PC-3 (cell line): ENCODE measurements at regions of chr7 and their contacts with region 1.

Region 1: DNA sequence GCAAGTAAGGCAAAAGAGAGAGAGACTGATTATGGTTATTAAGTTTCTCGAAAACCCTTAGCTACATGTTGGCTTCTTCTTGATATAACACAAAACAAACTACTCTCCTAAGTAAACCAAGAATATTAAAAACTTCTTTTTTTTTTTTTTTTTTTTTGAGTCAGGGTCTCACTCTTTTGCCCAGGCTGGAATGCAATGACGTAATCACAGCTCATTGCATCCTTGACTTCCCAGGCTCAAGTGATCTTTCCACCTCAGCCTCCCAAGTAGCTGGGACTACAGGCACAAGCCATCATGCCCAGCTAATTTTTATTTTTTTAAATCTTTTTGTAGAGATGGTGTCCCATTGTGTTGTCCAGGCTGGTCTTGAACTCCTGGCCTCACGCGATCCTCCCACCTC is 102.2 kb upstream of the IL6 start:
- DNase-seq: no peak
- ATAC-seq: no peak
- H3K4me3 ChIP-seq: no peak overlapping the region
- H3K27ac ChIP-seq: no peak overlapping the region
- H3K4me1 ChIP-seq: peaks cover 12% of the 10 kb centered on the region; the same call in 1 of the 2 replicates
- H3K27me3 ChIP-seq: no peaks in the 10 kb centered on the region
- CTCF ChIP-seq: no peak

Region 2: GRCh38 chr7:22350466-22351328 is 274.1 kb before region 1 on chr7:
- CTCF ChIA-PET with region 1: interaction called, 10 read pairs
- POLR2A ChIA-PET with region 1: no interaction called
- intact Hi-C with region 1: no loop called
- DNase-seq: peak; percentile 76
- ATAC-seq: peak; percentile 67
- H3K4me3 ChIP-seq: peak overlapping the region; percentile 17; the same call in 1 of the 2 replicates
- H3K27ac ChIP-seq: peak overlapping the region; percentile 50
- H3K4me1 ChIP-seq: peaks cover 48% of the 10 kb centered on the region
- H3K27me3 ChIP-seq: no peaks in the 10 kb centered on the region
- CTCF ChIP-seq: no peak